Transverse colon (tissue), 4 donors: ENCODE measurements at regions of chr13 and their contacts with region 1.

Region 1: GRCh38 chr13:81058916-81059290 is 718.0 kb upstream of the SPRY2 start:
- DNase-seq: no peak
- H3K4me3 ChIP-seq: no peak overlapping the region
- H3K27ac ChIP-seq: no peak overlapping the region
- H3K4me1 ChIP-seq: no peaks in the 10 kb centered on the region
- H3K27me3 ChIP-seq: no peaks in the 10 kb centered on the region
- CTCF ChIP-seq: no peak
- EP300 ChIP-seq: no peak
- POLR2A ChIP-seq: no peak

Region 2: GRCh38 chr13:80524447-80525215 is 534.3 kb before region 1 on chr13:
- in situ Hi-C with region 1: no loop called
- intact Hi-C with region 1: loop called (anchors 5 kb)
- DNase-seq: no peak
- H3K4me3 ChIP-seq: no peak overlapping the region
- H3K27ac ChIP-seq: no peak overlapping the region
- H3K4me1 ChIP-seq: no peaks in the 10 kb centered on the region
- H3K27me3 ChIP-seq: no peaks in the 10 kb centered on the region
- CTCF ChIP-seq: no peak
- EP300 ChIP-seq: no peak
- POLR2A ChIP-seq: no peak

Region 3: GRCh38 chr13:80562433-80563156 is 496.3 kb before region 1 on chr13:
- in situ Hi-C with region 1: no loop called
- intact Hi-C with region 1: no loop called
- DNase-seq: no peak
- H3K4me3 ChIP-seq: no peak overlapping the region
- H3K27ac ChIP-seq: no peak overlapping the region
- H3K4me1 ChIP-seq: peaks cover 0 to 7% (median 0%) of the 10 kb centered on the region in 4 donors
- H3K27me3 ChIP-seq: no peaks in the 10 kb centered on the region
- CTCF ChIP-seq: no peak
- EP300 ChIP-seq: no peak
- POLR2A ChIP-seq: no peak

Region 4: DNA sequence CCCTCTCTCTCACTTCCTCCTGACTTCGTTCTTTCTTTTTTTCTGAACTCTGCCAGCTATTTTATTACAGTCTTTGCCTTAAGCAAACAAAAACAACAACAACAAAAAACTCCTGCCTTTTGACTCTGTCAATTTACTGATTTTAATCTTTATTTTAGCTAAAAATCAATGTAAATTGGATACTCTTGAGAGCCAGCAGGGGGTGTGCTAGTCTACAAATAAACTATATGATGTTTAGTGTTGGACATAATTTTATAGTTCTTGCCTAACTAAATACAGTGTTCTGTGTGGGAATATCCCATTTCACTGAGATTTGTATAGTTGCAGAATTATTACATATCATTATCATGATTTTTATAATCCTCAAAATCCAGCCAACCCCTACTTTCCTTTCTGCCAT is 481.9 kb after region 1 on chr13:
- in situ Hi-C with region 1: no loop called
- intact Hi-C with region 1: no loop called
- DNase-seq: no peak
- H3K4me3 ChIP-seq: no peak overlapping the region
- H3K27ac ChIP-seq: no peak overlapping the region
- H3K4me1 ChIP-seq: no peaks in the 10 kb centered on the region
- H3K27me3 ChIP-seq: no peaks in the 10 kb centered on the region
- CTCF ChIP-seq: peak in 3 of 5 experiments; percentile 10 to 31 (median 15)
- EP300 ChIP-seq: no peak
- POLR2A ChIP-seq: no peak